A549 (cell line): ENCODE measurements at regions of chr9 and their contacts with region 1.

Region 1: DNA sequence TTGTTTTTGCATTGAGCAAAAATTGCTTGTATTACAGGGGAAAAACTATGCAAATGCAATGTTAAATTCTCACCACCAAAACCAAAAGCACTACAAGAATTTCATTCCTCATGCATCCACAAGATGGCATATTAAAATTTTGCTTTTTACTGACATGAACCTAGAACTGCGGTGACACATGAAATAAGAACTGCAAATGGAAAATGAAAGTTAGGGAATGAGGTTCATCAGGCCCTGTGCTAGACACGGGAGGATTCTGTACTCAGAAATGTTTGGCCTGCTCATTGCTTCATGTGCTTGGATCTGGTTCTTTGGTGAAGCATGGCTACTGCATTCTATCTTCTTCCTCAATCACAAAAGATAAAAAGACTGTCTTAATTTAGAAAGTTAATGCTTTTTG is 9.1 kb upstream of the RFK start:
- DNase-seq: peak; percentile 48 to 66
- ATAC-seq: peak; percentile 77 to 86
- H3K4me3 ChIP-seq: no peak overlapping the region
- H3K27ac ChIP-seq: peak overlapping the region; percentile 42 to 68; a peak in 5 of 6 replicates
- H3K4me1 ChIP-seq: peaks cover 19% of the 10 kb centered on the region
- CTCF ChIP-seq: peak; percentile 66
- EP300 ChIP-seq: no peak
- POLR2A ChIP-seq: no peak
- RAD21 ChIP-seq: peak; percentile 39 to 52

Region 2: DNA sequence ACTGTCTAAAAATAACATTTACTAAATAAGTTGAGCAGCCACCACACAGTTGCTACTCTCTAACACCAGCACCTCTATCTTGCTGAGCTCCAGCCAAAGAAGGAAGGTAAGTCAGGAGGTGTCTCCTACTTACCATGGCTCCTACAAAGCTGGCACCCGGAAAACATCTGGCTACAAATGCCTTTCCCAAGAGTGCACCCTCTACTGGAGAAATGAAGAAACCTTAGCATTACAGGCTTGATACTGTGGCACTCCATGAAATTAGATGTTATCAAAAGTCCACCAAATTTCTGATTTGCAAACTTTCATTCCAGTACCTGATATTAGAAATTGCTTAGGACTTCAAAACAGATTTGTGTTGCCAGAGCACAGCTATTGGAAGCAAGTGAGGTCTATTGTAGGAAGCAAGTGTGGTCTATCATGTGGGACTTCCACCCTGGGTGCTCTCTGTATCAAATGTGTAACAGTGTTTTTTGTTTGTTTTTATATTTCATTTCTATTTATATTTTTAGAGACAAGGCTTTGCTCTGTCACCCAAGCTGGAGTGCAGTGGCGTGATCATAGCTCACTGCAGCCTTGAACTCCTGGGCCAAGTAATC is 16.5 kb after region 1 on chr9:
- CTCF ChIA-PET with region 1: interaction called, 11 read pairs
- POLR2A ChIA-PET with region 1: interaction called, 3 read pairs
- DNase-seq: peak; percentile 43 to 59
- ATAC-seq: peak; percentile 80 to 96; a peak in 4 of 6 replicates
- H3K4me3 ChIP-seq: no peak overlapping the region
- H3K27ac ChIP-seq: peak overlapping the region in 1 of 2 experiments; percentile 24; a peak in 1 of 6 replicates
- H3K4me1 ChIP-seq: peaks cover 7% of the 10 kb centered on the region; the same call in 1 of the 3 replicates
- CTCF ChIP-seq: peak; percentile 58
- EP300 ChIP-seq: no peak
- POLR2A ChIP-seq: no peak
- RAD21 ChIP-seq: peak in 1 of 2 experiments; percentile 36; a peak in 2 of 5 replicates